Heart left ventricle (tissue), 16 donors: ENCODE measurements at regions of chr4 and their contacts with region 1.

Region 1: DNA sequence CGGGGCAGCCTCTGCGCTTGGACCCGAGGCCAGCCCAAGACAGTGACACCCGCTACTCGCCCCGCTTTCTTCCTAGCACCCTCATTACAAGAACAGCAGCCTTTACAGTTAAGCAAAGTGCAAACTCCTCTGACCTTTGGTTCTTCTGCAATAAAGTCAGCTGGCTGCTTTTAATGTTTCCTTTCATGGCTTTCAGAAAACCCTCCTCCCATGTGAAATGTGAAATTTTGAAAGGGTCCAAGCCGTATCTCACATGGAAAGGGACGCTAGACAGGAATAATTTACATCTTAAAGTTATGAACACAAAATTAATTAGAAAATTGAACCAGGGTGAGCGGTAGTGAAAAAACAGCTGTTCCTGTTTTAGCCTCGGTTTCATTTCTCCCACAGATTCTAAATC is 520.1 kb upstream of the FRG1 start:
- DNase-seq: no peak
- ATAC-seq: no peak
- H3K4me3 ChIP-seq: no peak overlapping the region
- H3K27ac ChIP-seq: no peak overlapping the region
- H3K4me1 ChIP-seq: no peaks in the 10 kb centered on the region
- H3K27me3 ChIP-seq: no peaks in the 10 kb centered on the region
- CTCF ChIP-seq: no peak
- POLR2A ChIP-seq: no peak

Region 2: DNA sequence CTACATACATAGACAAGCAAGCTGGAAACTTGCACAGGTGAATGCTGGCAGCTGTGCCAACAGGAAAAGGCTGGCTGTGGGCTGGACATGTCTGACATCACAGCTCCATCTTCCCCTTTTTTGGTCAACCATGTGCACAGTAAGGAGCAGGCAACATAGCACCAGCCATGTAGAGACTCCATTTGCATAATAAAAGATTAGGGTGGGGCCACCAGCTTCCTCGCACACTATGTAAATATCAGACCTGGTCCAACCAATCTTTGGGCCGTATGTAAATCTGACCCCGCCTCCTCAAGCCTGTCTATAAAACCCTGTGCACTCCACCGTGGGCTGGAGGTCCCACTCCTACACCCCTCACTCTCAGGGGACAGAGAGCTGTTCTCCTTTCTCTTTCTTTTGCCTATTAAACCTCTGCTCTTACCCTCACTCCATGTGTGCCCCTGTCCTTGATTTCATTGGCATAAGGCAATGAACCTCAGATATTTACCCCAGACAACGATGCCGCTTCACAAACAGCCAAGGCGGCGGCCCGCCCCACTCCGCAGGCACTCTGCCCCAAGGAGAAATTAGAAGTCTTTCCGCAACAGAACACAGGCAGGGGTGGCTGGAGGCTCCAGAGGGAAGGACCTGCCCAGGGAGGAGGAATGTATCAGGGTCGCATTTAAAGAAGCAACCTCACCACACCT is 419.1 kb before region 1 on chr4:
- intact Hi-C with region 1: no loop called
- DNase-seq: no peak
- ATAC-seq: no peak
- H3K4me3 ChIP-seq: no peak overlapping the region
- H3K27ac ChIP-seq: no peak overlapping the region
- H3K4me1 ChIP-seq: no peaks in the 10 kb centered on the region
- H3K27me3 ChIP-seq: no peaks in the 10 kb centered on the region
- CTCF ChIP-seq: no peak
- POLR2A ChIP-seq: no peak

Region 3: DNA sequence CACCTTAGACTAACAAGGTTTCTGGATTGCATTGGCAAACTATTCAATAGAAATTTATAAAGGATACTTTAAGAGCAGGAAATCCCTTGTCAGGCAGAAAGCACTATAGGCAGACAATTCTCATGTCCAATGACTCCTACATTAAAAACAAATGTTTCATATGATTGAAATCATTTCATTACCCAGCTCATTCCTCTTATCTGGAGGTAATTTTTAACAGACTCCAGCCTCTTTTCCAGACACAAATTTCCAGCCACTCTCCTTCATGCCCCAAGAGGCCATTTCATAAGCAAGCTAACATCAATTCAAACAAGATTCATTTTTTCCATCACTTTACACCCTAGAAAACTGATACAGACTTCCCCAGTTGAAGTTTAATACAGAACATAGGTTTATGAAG is 25.0 kb after region 1 on chr4:
- intact Hi-C with region 1: loop called in 1 of 10 experiments (anchors 1 kb)
- DNase-seq: no peak
- ATAC-seq: no peak
- H3K4me3 ChIP-seq: no peak overlapping the region
- H3K27ac ChIP-seq: no peak overlapping the region
- H3K4me1 ChIP-seq: no peaks in the 10 kb centered on the region
- H3K27me3 ChIP-seq: peaks cover 0 to 6% (median 0%) of the 10 kb centered on the region in 9 donors
- CTCF ChIP-seq: no peak
- POLR2A ChIP-seq: no peak